G401 (cell line): ENCODE measurements at regions of chr6 and their contacts with region 1.

Region 1: GRCh38 chr6:36514554-36515456 is 32.5 kb downstream of the STK38 start:
- DNase-seq: no peak

Region 2: GRCh38 chr6:36445621-36446020 is 69.2 kb before region 1 on chr6:
- in situ Hi-C with region 1: loop called (anchors 5 kb)
- DNase-seq: no peak